GM12878 (cell line): ENCODE measurements at regions of chr4 and their contacts with region 1.

Region 1: GRCh38 chr4:89024051-89024675 is 32.8 kb downstream of the FAM13A start:
- DNase-seq: peak; percentile 47
- ATAC-seq: peak; percentile 99
- H3K4me3 ChIP-seq: no peak overlapping the region
- H3K27ac ChIP-seq: no peak overlapping the region
- H3K4me1 ChIP-seq: no peaks in the 10 kb centered on the region
- H3K27me3 ChIP-seq: no peaks in the 10 kb centered on the region
- CTCF ChIP-seq: peak; percentile 61 to 83 (median 62); a peak in 5 of 6 replicates
- EP300 ChIP-seq: no peak
- POLR2A ChIP-seq: no peak
- RAD21 ChIP-seq: peak; percentile 93

Region 2: DNA sequence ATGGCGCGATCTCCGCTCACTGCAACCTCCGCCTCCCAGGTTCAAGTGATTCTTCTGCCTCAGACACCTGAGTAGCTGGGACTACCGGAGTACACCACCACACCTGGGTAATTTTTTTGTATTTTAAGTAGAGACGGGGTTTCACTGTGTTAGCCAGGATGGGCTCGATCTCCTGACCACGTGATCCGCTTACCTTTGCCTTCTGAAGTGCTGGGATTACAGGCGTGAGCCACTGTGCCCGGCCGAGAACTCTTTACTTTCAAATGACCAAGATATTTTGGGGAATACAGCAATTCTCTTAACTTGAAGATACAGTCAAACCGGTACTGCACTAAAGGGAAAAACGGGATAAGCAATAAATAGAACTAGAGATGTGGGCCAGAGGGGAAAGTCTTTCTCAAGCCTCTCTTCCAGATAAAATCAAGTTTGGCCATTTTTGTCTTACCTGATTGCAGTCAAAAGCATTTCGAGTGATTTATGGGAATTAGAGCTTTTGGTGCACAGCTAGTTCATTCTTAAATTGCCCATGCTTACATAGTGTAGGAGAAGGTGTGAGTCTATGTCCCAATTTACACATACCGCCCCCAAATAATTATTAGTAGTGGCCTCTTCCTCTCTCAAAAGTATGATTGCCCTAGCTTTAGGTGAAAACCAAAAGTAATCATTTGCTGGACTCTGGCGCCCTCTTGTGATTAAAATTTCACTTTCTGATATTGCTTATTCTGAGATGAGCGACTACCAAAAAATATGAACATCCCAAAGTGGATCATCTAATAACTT is 812.5 kb before region 1 on chr4:
- CTCF ChIA-PET with region 1: no interaction called
- POLR2A ChIA-PET with region 1: no interaction called
- RAD21 ChIA-PET with region 1: no interaction called
- SMC1A ChIA-PET with region 1: no interaction called
- in situ Hi-C with region 1: no loop called
- intact Hi-C with region 1: loop called (anchors 5 kb)
- DNase-seq: no peak
- ATAC-seq: peak; percentile 87
- H3K4me3 ChIP-seq: no peak overlapping the region
- H3K27ac ChIP-seq: no peak overlapping the region
- H3K4me1 ChIP-seq: no peaks in the 10 kb centered on the region
- H3K27me3 ChIP-seq: no peaks in the 10 kb centered on the region
- CTCF ChIP-seq: peak; percentile 43 to 77 (median 69)
- EP300 ChIP-seq: no peak
- POLR2A ChIP-seq: no peak
- RAD21 ChIP-seq: peak; percentile 95

Region 3: GRCh38 chr4:88672987-88673386 is 351.2 kb before region 1 on chr4:
- CTCF ChIA-PET with region 1: interaction called, 22 read pairs
- POLR2A ChIA-PET with region 1: no interaction called
- RAD21 ChIA-PET with region 1: interaction called, 7 read pairs
- SMC1A ChIA-PET with region 1: interaction called, 11 read pairs
- in situ Hi-C with region 1: no loop called
- intact Hi-C with region 1: loop called (anchors 2 kb)
- DNase-seq: no peak
- ATAC-seq: peak; percentile 91
- H3K4me3 ChIP-seq: no peak overlapping the region
- H3K27ac ChIP-seq: no peak overlapping the region
- H3K4me1 ChIP-seq: no peaks in the 10 kb centered on the region
- H3K27me3 ChIP-seq: no peaks in the 10 kb centered on the region
- CTCF ChIP-seq: peak; percentile 50 to 67 (median 64)
- EP300 ChIP-seq: no peak
- POLR2A ChIP-seq: no peak
- RAD21 ChIP-seq: peak; percentile 51

Region 4: GRCh38 chr4:88823058-88823919 is 200.9 kb before region 1 on chr4:
- CTCF ChIA-PET with region 1: interaction called, 433 read pairs
- POLR2A ChIA-PET with region 1: interaction called, 15 read pairs
- RAD21 ChIA-PET with region 1: interaction called, 263 read pairs
- SMC1A ChIA-PET with region 1: interaction called, 401 read pairs
- in situ Hi-C with region 1: loop called (anchors 5 kb)
- intact Hi-C with region 1: loop called (anchors 1 kb)
- DNase-seq: peak; percentile 57
- ATAC-seq: peak; percentile 97
- H3K4me3 ChIP-seq: peak overlapping the region; percentile 64
- H3K27ac ChIP-seq: no peak overlapping the region
- H3K4me1 ChIP-seq: peaks cover 5% of the 10 kb centered on the region; the same call in 1 of the 2 replicates
- H3K27me3 ChIP-seq: no peaks in the 10 kb centered on the region
- CTCF ChIP-seq: no peak
- EP300 ChIP-seq: no peak
- POLR2A ChIP-seq: no peak
- RAD21 ChIP-seq: no peak

Region 5: GRCh38 chr4:89009115-89009514 is 15.0 kb before region 1 on chr4:
- CTCF ChIA-PET with region 1: interaction called, 22 read pairs
- POLR2A ChIA-PET with region 1: no interaction called
- RAD21 ChIA-PET with region 1: interaction called, 8 read pairs
- SMC1A ChIA-PET with region 1: interaction called, 28 read pairs
- in situ Hi-C with region 1: no loop called
- intact Hi-C with region 1: no loop called
- DNase-seq: no peak
- ATAC-seq: no peak
- H3K4me3 ChIP-seq: no peak overlapping the region
- H3K27ac ChIP-seq: no peak overlapping the region
- H3K4me1 ChIP-seq: no peaks in the 10 kb centered on the region
- H3K27me3 ChIP-seq: no peaks in the 10 kb centered on the region
- CTCF ChIP-seq: no peak
- EP300 ChIP-seq: no peak
- POLR2A ChIP-seq: no peak
- RAD21 ChIP-seq: no peak

Region 6: DNA sequence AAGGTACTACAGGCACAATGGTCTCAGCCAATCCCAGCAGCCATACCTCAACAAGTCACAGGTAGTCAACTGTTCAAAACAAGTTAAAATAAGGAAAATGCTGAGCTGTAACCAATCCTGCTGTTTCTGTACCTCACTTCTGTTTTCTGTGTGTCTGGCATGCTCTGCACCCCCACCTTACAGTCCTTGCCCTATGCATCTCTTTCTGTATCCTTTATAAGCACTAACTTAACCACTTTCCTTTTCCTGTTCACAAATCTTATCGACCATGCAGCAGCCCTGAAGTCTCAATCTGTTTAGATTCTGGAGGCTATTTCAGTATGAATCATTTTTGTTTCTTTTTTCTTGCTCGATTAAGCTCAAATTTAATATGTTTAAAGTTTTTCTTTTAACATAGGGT is 45.3 kb after region 1 on chr4:
- CTCF ChIA-PET with region 1: interaction called, 3 read pairs
- POLR2A ChIA-PET with region 1: interaction called, 5 read pairs
- RAD21 ChIA-PET with region 1: interaction called, 9 read pairs
- SMC1A ChIA-PET with region 1: interaction called, 17 read pairs
- in situ Hi-C with region 1: no loop called
- intact Hi-C with region 1: no loop called
- DNase-seq: peak; percentile 40
- ATAC-seq: peak; percentile 89
- H3K4me3 ChIP-seq: no peak overlapping the region
- H3K27ac ChIP-seq: no peak overlapping the region
- H3K4me1 ChIP-seq: no peaks in the 10 kb centered on the region; the same call in 1 of the 2 replicates
- H3K27me3 ChIP-seq: no peaks in the 10 kb centered on the region
- CTCF ChIP-seq: no peak
- EP300 ChIP-seq: no peak
- POLR2A ChIP-seq: no peak
- RAD21 ChIP-seq: no peak

Region 7: GRCh38 chr4:89256203-89256800 is 232.1 kb after region 1 on chr4:
- CTCF ChIA-PET with region 1: no interaction called
- POLR2A ChIA-PET with region 1: no interaction called
- RAD21 ChIA-PET with region 1: no interaction called
- SMC1A ChIA-PET with region 1: no interaction called
- in situ Hi-C with region 1: no loop called
- intact Hi-C with region 1: no loop called
- DNase-seq: no peak
- ATAC-seq: no peak
- H3K4me3 ChIP-seq: no peak overlapping the region
- H3K27ac ChIP-seq: no peak overlapping the region
- H3K4me1 ChIP-seq: no peaks in the 10 kb centered on the region
- H3K27me3 ChIP-seq: no peaks in the 10 kb centered on the region; a peak in 2 of 4 replicates
- CTCF ChIP-seq: no peak
- EP300 ChIP-seq: no peak
- POLR2A ChIP-seq: no peak
- RAD21 ChIP-seq: no peak